ENCODE measurements at regions of chr15 and their contacts with region 1.

Region 1: DNA sequence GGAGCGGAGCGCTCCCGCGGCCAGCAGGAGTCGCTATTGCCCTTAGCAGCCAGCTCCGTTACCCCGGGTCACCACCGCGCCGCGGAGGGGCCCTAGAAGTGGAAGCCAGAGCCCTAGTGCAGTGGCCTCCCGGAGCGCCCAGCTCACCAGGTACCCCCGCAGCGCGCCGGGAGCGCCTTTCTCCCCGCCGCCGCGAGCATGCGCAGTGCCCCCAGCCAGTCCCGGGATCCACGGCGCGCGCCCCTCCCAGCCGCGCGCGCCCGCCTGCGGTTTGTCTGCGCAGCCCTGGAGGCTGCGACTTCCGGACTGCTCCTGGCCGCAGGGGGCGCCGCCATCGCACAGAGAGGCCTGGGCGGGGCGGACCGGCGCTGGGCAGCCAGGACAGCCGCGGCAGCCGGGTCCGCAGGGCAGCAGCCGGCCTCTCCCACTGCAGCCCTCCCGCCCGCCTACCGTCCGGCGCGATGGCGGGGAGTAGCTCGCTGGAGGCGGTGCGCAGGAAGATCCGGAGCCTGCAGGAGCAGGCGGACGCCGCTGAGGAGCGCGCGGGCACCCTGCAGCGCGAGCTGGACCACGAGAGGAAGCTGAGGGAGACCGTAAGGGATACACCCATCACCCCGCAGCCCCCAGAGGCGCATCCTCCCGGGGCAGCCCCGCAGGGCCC is 5.7 kb downstream of the TPM1 start:
- DNase-seq: peak; percentile 94
- H3K4me3 ChIP-seq: peak overlapping the region; percentile 71 to 83
- H3K27ac ChIP-seq: peak overlapping the region; percentile 88 to 91
- H3K4me1 ChIP-seq: peaks cover 31% of the 10 kb centered on the region
- H3K27me3 ChIP-seq: no peaks in the 10 kb centered on the region
- CTCF ChIP-seq: peak; percentile 88 to 94 (median 92)
- POLR2A ChIP-seq: no peak

Region 2: DNA sequence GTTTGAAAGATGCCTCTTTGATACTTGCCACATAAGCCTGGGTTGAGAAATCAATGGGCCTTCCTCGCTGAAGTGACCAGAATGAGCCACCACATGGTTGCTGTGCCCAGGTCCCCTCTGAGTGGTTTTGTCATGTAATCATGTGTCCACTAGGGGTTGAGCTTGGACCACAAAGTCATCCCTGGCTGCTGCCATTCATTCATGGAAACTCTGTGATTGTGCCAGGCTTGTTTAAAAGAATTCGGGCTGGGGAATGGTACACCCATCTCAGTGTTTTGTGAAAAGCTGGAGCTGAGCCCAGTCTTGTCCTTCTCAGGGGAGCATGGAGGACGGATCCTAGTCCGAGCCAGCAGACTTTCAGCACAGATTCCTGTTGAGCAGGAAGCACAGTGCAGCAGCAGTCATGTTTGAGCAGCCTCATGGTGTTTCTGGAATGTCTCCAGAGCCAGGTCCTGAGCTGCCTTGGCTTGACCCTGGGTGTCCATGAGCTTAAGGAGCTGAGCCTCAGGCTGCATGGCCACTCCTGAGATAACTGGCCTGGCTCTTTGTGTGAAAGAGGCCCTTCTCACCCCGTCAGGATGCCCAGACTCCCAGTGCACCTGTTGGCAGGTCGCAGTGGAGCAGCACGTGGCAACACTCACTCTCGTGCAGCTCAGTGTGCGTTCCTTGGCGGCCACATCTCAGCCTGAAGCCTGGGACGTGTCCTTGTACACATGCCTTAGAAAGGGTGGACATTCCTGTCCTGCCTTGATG is 266.0 kb before region 1 on chr15:
- intact Hi-C with region 1: loop called (anchors 10 kb)
- DNase-seq: peak; percentile 84
- H3K4me3 ChIP-seq: no peak overlapping the region
- H3K27ac ChIP-seq: no peak overlapping the region
- H3K4me1 ChIP-seq: peaks cover 4% of the 10 kb centered on the region
- H3K27me3 ChIP-seq: no peaks in the 10 kb centered on the region
- CTCF ChIP-seq: peak; percentile 57 to 91 (median 82)
- POLR2A ChIP-seq: no peak

Region 3: GRCh38 chr15:63093486-63094205 is 45.4 kb after region 1 on chr15:
- intact Hi-C with region 1: loop called (anchors 10 kb)
- DNase-seq: peak; percentile 91
- H3K4me3 ChIP-seq: no peak overlapping the region
- H3K27ac ChIP-seq: no peak overlapping the region
- H3K4me1 ChIP-seq: no peaks in the 10 kb centered on the region
- H3K27me3 ChIP-seq: no peaks in the 10 kb centered on the region
- CTCF ChIP-seq: peak; percentile 68 to 83 (median 75)
- POLR2A ChIP-seq: no peak

Region 4: DNA sequence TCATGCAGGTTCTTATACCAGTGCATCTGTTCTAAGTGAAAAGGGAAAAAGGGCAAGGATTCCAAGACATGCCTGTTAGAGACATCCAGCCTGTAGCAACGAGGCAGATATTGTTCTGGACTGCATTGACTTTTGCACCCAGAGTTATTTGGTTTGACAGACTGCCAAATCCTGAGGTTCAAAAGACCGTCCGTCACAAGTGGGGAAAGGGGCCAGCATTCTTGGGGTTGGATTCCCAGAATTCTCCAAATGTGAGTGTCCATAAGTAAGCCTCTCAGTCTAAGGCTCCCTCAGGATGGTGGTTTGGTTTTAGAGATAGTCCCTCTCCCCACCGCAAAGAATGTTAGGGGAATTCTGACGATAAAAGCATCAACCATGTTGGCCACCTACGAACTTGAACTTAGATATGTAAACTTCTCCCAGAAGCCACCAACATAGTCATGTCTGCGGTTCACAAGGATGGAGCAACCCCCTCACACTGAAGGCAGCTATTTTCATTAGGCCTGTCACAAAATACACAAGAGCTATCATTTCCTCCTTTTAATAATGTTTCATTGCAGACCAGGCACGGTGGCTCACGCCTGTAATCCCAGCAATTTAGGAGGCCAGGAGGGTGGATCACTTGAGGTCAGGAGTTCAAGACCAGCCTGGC is 59.8 kb after region 1 on chr15:
- intact Hi-C with region 1: no loop called
- DNase-seq: peak; percentile 38
- H3K4me3 ChIP-seq: no peak overlapping the region
- H3K27ac ChIP-seq: peak overlapping the region in 1 of 2 donors; percentile 53
- H3K4me1 ChIP-seq: peaks cover 2% of the 10 kb centered on the region
- H3K27me3 ChIP-seq: no peaks in the 10 kb centered on the region
- CTCF ChIP-seq: no peak
- POLR2A ChIP-seq: no peak

Measured in testis (tissue), 5 donors.